ENCODE measurements at regions of chr6 and their contacts with region 1.

Region 1: GRCh38 chr6:159693128-159693893 is at the start of gene SOD2:
- DNase-seq: peak; percentile 75 to 97 (median 85)
- H3K4me3 ChIP-seq: peak within 1 kb of the TSS; percentile 80 to 100 (median 81)
- H3K4me3 Mint-ChIP-seq: peak within 1 kb of the TSS; percentile 93 to 96
- H3K27ac ChIP-seq: peak within 1 kb of the TSS; percentile 94 to 96
- H3K27ac Mint-ChIP-seq: peak within 1 kb of the TSS; percentile 95 to 99 (median 97)
- H3K4me1 ChIP-seq: peaks cover 42 to 59% of the 10 kb centered on the region in 2 donors
- H3K4me1 Mint-ChIP-seq: peaks cover 51% of the 10 kb centered on the region
- H3K27me3 ChIP-seq: no peaks in the 10 kb centered on the region
- H3K27me3 Mint-ChIP-seq: peaks cover 0 to 4% (median 0%) of the 10 kb centered on the region in 3 donors
- CTCF ChIP-seq: no peak
- polyA plus RNA-seq, gene SOD2: 447 to 746 (median 569) TPM

Region 2: GRCh38 chr6:159726918-159727716 is 33.8 kb after region 1 on chr6 and contains the start of gene WTAP:
- intact Hi-C with region 1: loop called (anchors 2 kb)
- DNase-seq: peak; percentile 90 to 96 (median 90)
- H3K4me3 ChIP-seq: peak within 1 kb of the TSS; percentile 82 to 98 (median 97)
- H3K4me3 Mint-ChIP-seq: peak within 1 kb of the TSS; percentile 89 to 92
- H3K27ac ChIP-seq: peak within 1 kb of the TSS; percentile 89 to 100
- H3K27ac Mint-ChIP-seq: peak within 1 kb of the TSS; percentile 95 to 98 (median 97)
- H3K4me1 ChIP-seq: peaks cover 27 to 44% of the 10 kb centered on the region in 2 donors
- H3K4me1 Mint-ChIP-seq: peaks cover 42% of the 10 kb centered on the region
- H3K27me3 ChIP-seq: no peaks in the 10 kb centered on the region
- H3K27me3 Mint-ChIP-seq: no peaks in the 10 kb centered on the region
- CTCF ChIP-seq: no peak
- polyA plus RNA-seq, gene WTAP: 50.8 to 95.9 (median 94.7) TPM

Region 3: GRCh38 chr6:159789377-159790148 is 96.3 kb after region 1 on chr6 and contains the start of gene TCP1:
- intact Hi-C with region 1: loop called (anchors 2 to 5 kb)
- DNase-seq: peak; percentile 98 to 100 (median 100)
- H3K4me3 ChIP-seq: peak within 1 kb of the TSS; percentile 79 to 94 (median 91)
- H3K4me3 Mint-ChIP-seq: peak within 1 kb of the TSS; percentile 94 to 97
- H3K27ac ChIP-seq: peak within 1 kb of the TSS; percentile 85 to 97
- H3K27ac Mint-ChIP-seq: peak within 1 kb of the TSS; percentile 95 to 98 (median 98)
- H3K4me1 ChIP-seq: peaks cover 28 to 38% of the 10 kb centered on the region in 2 donors
- H3K4me1 Mint-ChIP-seq: peaks cover 32% of the 10 kb centered on the region
- H3K27me3 ChIP-seq: no peaks in the 10 kb centered on the region
- H3K27me3 Mint-ChIP-seq: peaks cover 0 to 1% (median 0%) of the 10 kb centered on the region in 3 donors
- CTCF ChIP-seq: no peak
- polyA plus RNA-seq, gene TCP1: 44.5 to 79.5 (median 69.3) TPM

Region 4: DNA sequence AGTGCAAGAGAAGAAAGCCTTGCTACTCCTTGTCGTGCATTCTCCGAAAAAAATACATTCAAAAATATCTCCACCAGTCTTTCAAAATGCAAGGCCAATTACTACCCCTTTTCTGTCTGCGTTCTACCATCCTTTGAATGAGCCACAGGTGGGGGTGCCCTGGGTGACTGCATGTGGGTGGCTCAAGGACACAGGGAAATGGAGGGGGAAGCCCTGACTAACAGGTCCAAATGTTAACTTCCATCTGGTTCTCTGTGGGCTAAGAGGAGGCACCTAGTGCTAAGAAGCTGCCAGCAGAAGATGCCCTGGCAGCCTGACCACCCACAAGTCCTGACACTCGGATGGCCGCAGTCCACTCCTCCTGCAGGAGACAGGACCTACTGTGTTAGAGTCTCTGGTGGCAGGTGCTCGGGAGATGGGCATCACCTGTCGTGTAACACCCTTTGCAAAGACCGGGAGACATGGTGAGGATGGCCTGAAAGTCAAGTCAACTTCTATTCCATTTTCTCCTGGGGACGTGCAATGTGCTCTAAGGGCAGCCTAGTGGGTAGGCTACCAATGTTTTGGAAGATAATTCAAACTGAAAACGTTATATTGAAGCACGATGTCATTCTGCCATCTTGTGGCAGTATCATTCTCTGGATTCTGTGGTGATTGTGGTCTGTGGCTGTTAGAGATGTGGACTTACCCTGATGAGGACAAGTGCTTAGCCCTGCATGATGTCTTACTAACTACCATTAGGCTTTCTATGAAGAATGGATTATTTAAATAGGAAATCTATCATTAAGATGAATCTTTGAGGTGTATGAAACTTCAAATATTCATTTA is 248.2 kb after region 1 on chr6:
- intact Hi-C with region 1: no loop called
- DNase-seq: peak; percentile 36 to 50 (median 49)
- H3K4me3 ChIP-seq: no peak overlapping the region
- H3K4me3 Mint-ChIP-seq: no peak overlapping the region
- H3K27ac ChIP-seq: no peak overlapping the region
- H3K27ac Mint-ChIP-seq: no peak overlapping the region
- H3K4me1 ChIP-seq: peaks cover 18 to 25% of the 10 kb centered on the region in 2 donors
- H3K4me1 Mint-ChIP-seq: peaks cover 28% of the 10 kb centered on the region
- H3K27me3 ChIP-seq: peaks cover 0 to 3% of the 10 kb centered on the region in 2 donors
- H3K27me3 Mint-ChIP-seq: peaks cover 9 to 27% (median 23%) of the 10 kb centered on the region in 3 donors
- CTCF ChIP-seq: peak; percentile 46

Region 5: GRCh38 chr6:159968440-159969203 is 275.3 kb after region 1 on chr6 and contains the start of gene IGF2R:
- intact Hi-C with region 1: loop called in 1 of 2 experiments (anchors 10 kb)
- DNase-seq: peak; percentile 78 to 88 (median 85)
- H3K4me3 ChIP-seq: peak within 1 kb of the TSS; percentile 59 to 89 (median 61)
- H3K4me3 Mint-ChIP-seq: peak within 1 kb of the TSS; percentile 95 to 96
- H3K27ac ChIP-seq: peak within 1 kb of the TSS; percentile 89 to 91
- H3K27ac Mint-ChIP-seq: peak within 1 kb of the TSS; percentile 84 to 97 (median 92)
- H3K4me1 ChIP-seq: peaks cover 68 to 78% of the 10 kb centered on the region in 2 donors
- H3K4me1 Mint-ChIP-seq: peaks cover 68% of the 10 kb centered on the region
- H3K27me3 ChIP-seq: no peaks in the 10 kb centered on the region
- H3K27me3 Mint-ChIP-seq: peaks cover 7 to 11% (median 8%) of the 10 kb centered on the region in 3 donors
- CTCF ChIP-seq: peak; percentile 28
- polyA plus RNA-seq, gene IGF2R: 6.9 to 44.8 (median 8.2) TPM